Activated CD4-positive, alpha-beta T cell treated with anti-CD3 and anti-CD28 coated beads for 36 hours (primary cell): ENCODE measurements at regions of chr22 and their contacts with region 1.

Region 1: GRCh38 chr22:21102659-21103267 is 57.0 kb downstream of the LRRC74B start:
- DNase-seq: peak; percentile 92
- ATAC-seq: peak; percentile 99
- H3K4me3 Mint-ChIP-seq: peak overlapping the region; percentile 18
- H3K27ac Mint-ChIP-seq: no peak overlapping the region
- H3K4me1 Mint-ChIP-seq: peaks cover 5% of the 10 kb centered on the region
- H3K27me3 Mint-ChIP-seq: peaks cover 14% of the 10 kb centered on the region

Region 2: DNA sequence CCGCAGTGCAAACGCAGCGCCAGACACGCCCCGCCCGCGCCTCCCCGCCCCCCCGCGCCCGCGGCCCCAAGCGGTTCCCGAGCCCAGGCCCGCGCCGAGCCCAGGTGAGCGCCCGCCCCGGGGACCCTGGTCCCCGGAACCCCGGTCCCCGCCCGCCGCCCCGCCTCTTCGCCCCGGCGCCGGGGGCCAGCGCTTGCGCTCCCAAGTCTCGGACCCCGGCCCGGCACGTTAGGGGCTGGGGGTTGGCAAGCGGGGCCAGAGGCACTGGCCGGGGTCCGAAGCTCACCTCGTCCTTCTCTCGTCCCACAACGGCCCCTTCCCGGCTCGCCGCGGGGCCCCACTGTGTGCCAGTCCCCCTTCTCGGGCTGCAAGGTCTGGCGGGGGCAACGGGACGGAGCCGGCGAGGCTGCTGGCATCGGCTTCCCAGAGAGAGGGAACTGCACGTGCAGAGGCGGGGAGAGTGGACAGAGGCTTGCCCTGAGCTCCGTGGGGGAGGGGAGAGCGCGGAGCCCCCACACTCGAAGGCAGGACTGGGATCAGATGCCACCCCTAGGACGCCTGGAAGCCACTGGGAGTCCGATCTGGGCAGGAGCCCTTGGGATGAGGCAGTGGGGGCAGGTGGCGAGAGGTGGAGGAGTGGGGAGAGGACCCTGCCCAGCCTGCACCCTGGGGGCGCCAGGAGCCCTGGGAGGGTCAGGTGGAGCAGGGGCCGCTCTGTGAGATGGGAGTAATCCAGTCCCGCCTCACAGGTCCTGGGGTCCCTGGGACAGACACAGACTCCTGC is 137.5 kb before region 1 on chr22:
- CTCF ChIA-PET with region 1: interaction called, 3 read pairs
- POLR2A ChIA-PET with region 1: no interaction called
- intact Hi-C with region 1: loop called in 1 of 2 experiments (anchors 10 kb)
- DNase-seq: no peak
- ATAC-seq: no peak
- H3K4me3 Mint-ChIP-seq: no peak overlapping the region
- H3K27ac Mint-ChIP-seq: no peak overlapping the region
- H3K4me1 Mint-ChIP-seq: peaks cover 11% of the 10 kb centered on the region
- H3K27me3 Mint-ChIP-seq: peaks cover 7% of the 10 kb centered on the region